Posterior cingulate gyrus (tissue), 11 donors: ENCODE measurements at regions of chr7 and their contacts with region 1.

Region 1: GRCh38 chr7:78489476-78490240 is 691.1 kb downstream of the PHTF2 start:
- DNase-seq: no peak

Region 2: GRCh38 chr7:78558566-78558965 is 68.9 kb after region 1 on chr7:
- intact Hi-C with region 1: loop called (anchors 10 kb)
- DNase-seq: peak in 1 of 10 donors; percentile 41